ENCODE measurements at regions of chr15 and their contacts with region 1.

Region 1: GRCh38 chr15:94119923-94120775 is 111.2 kb upstream of the MCTP2 start:
- DNase-seq: peak; percentile 81
- H3K27ac ChIP-seq: no peak overlapping the region
- CTCF ChIP-seq: peak; percentile 100

Region 2: GRCh38 chr15:93030430-93031105 is 1089.6 kb before region 1 on chr15:
- CTCF ChIA-PET with region 1: interaction called, 42 read pairs
- POLR2A ChIA-PET with region 1: no interaction called
- DNase-seq: peak; percentile 81
- H3K27ac ChIP-seq: peak overlapping the region; percentile 98
- CTCF ChIP-seq: peak; percentile 93

Region 3: GRCh38 chr15:93087825-93088199 is 1032.3 kb before region 1 on chr15:
- CTCF ChIA-PET with region 1: interaction called, 22 read pairs
- POLR2A ChIA-PET with region 1: no interaction called
- DNase-seq: peak; percentile 74
- H3K27ac ChIP-seq: no peak overlapping the region
- CTCF ChIP-seq: peak; percentile 95

Region 4: DNA sequence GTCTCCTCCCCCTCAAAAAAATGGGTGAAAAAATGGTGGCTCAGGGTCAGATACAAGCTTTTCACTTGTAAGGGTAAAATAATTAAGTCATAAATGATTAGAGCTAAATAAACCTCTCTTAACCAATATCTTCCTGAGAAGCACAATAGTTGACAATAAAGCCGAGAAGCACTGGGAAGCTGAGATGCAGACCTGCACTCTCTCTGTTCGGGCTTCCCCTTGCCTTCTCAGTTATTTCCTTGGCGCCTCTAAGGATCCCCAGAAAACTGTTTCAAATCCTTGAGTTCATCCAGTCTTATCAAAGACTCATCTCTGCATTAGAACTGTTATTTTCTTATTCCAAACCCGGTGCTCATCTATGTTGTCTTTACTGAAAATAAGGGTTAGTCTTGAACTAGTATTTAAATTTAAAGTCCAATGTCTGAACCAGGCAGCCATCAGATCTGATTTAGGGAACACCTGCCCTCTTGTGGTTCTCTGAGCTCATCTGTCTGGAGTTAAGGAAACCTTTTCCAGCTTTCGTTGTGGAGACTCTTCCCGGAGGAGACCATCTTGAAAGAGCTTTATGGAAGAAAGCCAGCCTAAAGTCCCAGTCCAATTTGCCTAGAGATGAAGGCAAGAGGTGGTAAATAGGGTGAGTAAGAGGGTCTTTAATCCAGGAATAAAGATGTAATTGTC is 145.2 kb before region 1 on chr15:
- CTCF ChIA-PET with region 1: interaction called, 16 read pairs
- POLR2A ChIA-PET with region 1: no interaction called
- DNase-seq: peak; percentile 75
- H3K27ac ChIP-seq: no peak overlapping the region
- CTCF ChIP-seq: peak; percentile 74

Region 5: DNA sequence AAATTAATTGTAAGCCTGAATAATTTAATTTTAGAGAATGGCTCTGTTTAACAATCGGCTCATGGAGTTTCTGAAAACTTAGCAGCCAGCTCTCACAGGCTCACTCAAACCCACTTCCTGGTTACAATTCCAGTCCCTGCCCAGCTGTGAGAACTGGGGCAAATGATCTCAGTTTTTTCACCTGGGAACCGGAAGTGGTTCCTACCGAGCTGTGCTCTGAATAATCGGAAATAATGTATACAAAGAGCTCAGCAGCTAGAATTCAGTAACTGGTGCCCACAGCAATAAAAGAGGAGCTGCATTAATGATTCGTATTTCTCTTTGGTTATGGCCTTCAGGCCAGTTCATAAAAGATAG is 133.1 kb before region 1 on chr15:
- CTCF ChIA-PET with region 1: interaction called, 13 read pairs
- POLR2A ChIA-PET with region 1: no interaction called
- DNase-seq: no peak
- H3K27ac ChIP-seq: no peak overlapping the region
- CTCF ChIP-seq: no peak

Region 6: GRCh38 chr15:93997084-93997918 is 122.8 kb before region 1 on chr15:
- CTCF ChIA-PET with region 1: interaction called, 54 read pairs
- POLR2A ChIA-PET with region 1: no interaction called
- DNase-seq: peak; percentile 43
- H3K27ac ChIP-seq: no peak overlapping the region
- CTCF ChIP-seq: peak; percentile 93

Region 7: GRCh38 chr15:94004697-94005096 is 115.5 kb before region 1 on chr15:
- CTCF ChIA-PET with region 1: interaction called, 54 read pairs
- POLR2A ChIA-PET with region 1: no interaction called
- DNase-seq: peak; percentile 41
- H3K27ac ChIP-seq: peak overlapping the region; percentile 79
- CTCF ChIP-seq: no peak

Region 8: DNA sequence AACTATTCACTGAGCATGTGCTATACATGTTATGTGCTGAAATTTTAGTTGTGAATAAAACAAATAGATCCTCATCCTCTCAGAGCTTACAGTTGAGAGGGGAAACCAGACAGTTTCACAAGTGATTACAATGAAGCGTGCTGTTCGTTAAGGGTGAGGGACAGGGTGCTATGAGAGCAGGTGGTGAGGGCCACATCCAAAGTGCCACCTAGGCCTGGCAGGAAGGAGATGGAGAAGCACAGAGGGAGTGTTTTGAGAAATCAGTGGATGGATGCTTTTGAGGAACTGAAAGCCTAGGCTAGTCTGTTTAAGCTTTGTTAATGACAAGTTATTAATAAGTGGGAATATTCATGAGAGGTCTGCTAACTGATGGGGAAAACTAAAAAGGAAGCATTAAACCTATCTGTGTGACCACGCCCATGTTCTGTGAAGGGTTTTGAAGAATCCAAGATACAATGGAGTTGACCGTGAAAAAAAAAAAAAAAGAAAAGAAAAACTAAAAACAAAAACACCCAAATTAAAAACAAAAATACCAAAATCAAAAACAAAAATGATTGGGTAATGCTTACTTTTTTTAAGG is 118.5 kb after region 1 on chr15:
- CTCF ChIA-PET with region 1: no interaction called
- POLR2A ChIA-PET with region 1: no interaction called
- DNase-seq: no peak
- H3K27ac ChIP-seq: peak overlapping the region; percentile 70; the same call in 1 of the 2 replicates
- CTCF ChIP-seq: no peak